Endothelial cell of umbilical vein (primary cell): ENCODE measurements at regions of chr3 and their contacts with region 1.

Region 1: DNA sequence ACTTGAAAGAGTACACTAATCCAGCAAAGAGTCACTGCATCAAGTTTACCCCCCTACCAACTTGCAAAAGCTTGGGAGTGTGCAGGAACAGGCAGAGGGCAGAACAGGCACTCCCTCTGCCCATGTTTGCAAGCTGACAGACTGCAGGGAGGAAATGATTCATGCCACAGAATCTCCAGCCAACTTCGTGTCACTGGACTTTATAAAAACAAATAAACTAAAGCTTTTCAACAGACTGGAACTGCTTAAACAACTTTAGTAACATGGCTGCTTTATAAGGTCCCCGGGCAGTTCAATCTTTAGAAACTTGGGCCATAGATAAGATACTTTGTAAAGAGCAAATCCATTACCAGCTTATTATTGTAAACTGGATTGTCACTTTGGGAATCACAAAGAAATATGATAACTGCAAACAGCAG is 129.4 kb downstream of the THRB start:
- DNase-seq: peak; percentile 97
- H3K4me3 ChIP-seq: no peak overlapping the region
- H3K27ac ChIP-seq: peak overlapping the region; percentile 29
- H3K4me1 ChIP-seq: peaks cover 12% of the 10 kb centered on the region
- H3K27me3 ChIP-seq: no peaks in the 10 kb centered on the region
- CTCF ChIP-seq: peak in 1 of 2 donors; percentile 2
- POLR2A ChIP-seq: peak; percentile 26

Region 2: DNA sequence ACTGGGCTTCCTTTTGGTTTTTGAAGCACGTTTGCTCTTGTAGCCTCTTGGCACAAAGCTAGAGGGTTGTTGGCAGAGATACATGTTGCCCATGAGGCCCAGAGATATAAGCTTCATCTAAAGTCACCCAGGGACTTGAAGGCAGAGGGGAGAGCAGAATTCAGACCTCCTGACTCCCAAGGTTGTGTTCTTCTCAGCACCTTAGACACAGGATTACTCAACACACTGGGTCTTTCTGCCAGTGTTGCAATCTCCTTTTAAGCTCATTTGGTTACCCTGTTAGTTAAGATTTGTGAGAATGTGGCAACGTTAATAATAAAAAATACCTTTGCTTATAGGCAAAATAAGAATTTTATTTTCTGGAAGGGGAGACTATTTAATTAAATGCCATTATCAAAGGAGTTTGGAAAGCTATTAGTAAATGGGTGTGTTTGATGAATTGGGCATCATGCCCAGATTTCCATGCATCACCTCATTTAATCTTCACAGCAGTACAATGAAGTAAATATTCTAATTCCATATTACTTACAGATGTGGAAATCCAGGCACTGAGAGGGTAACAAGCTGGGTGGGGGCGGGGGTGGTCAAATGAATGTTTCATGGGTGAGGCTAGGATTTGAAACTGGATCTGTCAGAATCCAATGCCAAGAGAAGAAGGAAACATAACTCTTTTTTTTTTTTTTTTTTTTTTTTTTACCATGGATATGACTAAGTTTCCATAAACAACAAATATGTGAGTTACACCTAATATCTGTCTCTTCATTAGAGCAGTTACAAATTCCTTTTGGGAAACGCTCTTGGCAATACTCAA is 236.8 kb before region 1 on chr3:
- CTCF ChIA-PET with region 1: no interaction called
- POLR2A ChIA-PET with region 1: no interaction called
- dilution Hi-C with region 1: no loop called
- intact Hi-C with region 1: no loop called
- DNase-seq: no peak
- H3K4me3 ChIP-seq: no peak overlapping the region
- H3K27ac ChIP-seq: no peak overlapping the region
- H3K4me1 ChIP-seq: no peaks in the 10 kb centered on the region
- H3K27me3 ChIP-seq: no peaks in the 10 kb centered on the region
- CTCF ChIP-seq: no peak
- POLR2A ChIP-seq: no peak

Region 3: GRCh38 chr3:24377218-24377993 is 12.2 kb after region 1 on chr3:
- CTCF ChIA-PET with region 1: interaction called, 10 read pairs
- POLR2A ChIA-PET with region 1: no interaction called
- dilution Hi-C with region 1: no loop called
- intact Hi-C with region 1: no loop called
- DNase-seq: no peak
- H3K4me3 ChIP-seq: no peak overlapping the region
- H3K27ac ChIP-seq: no peak overlapping the region
- H3K4me1 ChIP-seq: no peaks in the 10 kb centered on the region
- H3K27me3 ChIP-seq: no peaks in the 10 kb centered on the region
- CTCF ChIP-seq: no peak
- POLR2A ChIP-seq: no peak

Region 4: GRCh38 chr3:24416224-24416623 is 51.0 kb after region 1 on chr3:
- CTCF ChIA-PET with region 1: no interaction called
- POLR2A ChIA-PET with region 1: no interaction called
- dilution Hi-C with region 1: no loop called
- intact Hi-C with region 1: loop called (anchors 2 kb)
- DNase-seq: no peak
- H3K4me3 ChIP-seq: no peak overlapping the region
- H3K27ac ChIP-seq: no peak overlapping the region
- H3K4me1 ChIP-seq: no peaks in the 10 kb centered on the region
- H3K27me3 ChIP-seq: no peaks in the 10 kb centered on the region
- CTCF ChIP-seq: no peak
- POLR2A ChIP-seq: no peak

Region 5: GRCh38 chr3:24428481-24428880 is 63.3 kb after region 1 on chr3:
- CTCF ChIA-PET with region 1: no interaction called
- POLR2A ChIA-PET with region 1: no interaction called
- dilution Hi-C with region 1: no loop called
- intact Hi-C with region 1: no loop called
- DNase-seq: no peak
- H3K4me3 ChIP-seq: no peak overlapping the region
- H3K27ac ChIP-seq: no peak overlapping the region
- H3K4me1 ChIP-seq: no peaks in the 10 kb centered on the region
- H3K27me3 ChIP-seq: peaks cover 0 to 5% of the 10 kb centered on the region in 2 experiments
- CTCF ChIP-seq: no peak
- POLR2A ChIP-seq: no peak